K562 (cell line): ENCODE measurements at regions of chr19 and their contacts with region 1.

Region 1: GRCh38 chr19:17282488-17283255 is 971 bp downstream of the ANKLE1 start:
- DNase-seq: peak; percentile 85 to 91 (median 88)
- ATAC-seq: peak; percentile 96
- H3K4me3 ChIP-seq: peak overlapping the region; percentile 51
- H3K27ac ChIP-seq: peak overlapping the region; percentile 58; the same call in 2 of the 3 replicates
- H3K4me1 ChIP-seq: peaks cover 2 to 31% of the 10 kb centered on the region in 2 experiments
- H3K27me3 ChIP-seq: no peaks in the 10 kb centered on the region
- CTCF ChIP-seq: peak; percentile 88 to 95 (median 94)
- EP300 ChIP-seq: no peak
- POLR2A ChIP-seq: 0 out of 2 replicates have a peak, but pooled peaks have one; percentile 32
- RAD21 ChIP-seq: peak; percentile 86 to 94

Region 2: GRCh38 chr19:17069218-17069617 is 213.5 kb before region 1 on chr19:
- CTCF ChIA-PET with region 1: interaction called, 10 read pairs
- POLR2A ChIA-PET with region 1: interaction called, 3 read pairs
- in situ Hi-C with region 1: loop called (anchors 5 kb)
- intact Hi-C with region 1: loop called (anchors 2 kb)
- DNase-seq: no peak
- ATAC-seq: 0 out of 3 replicates have a peak, but pooled peaks have one; percentile 8
- H3K4me3 ChIP-seq: no peak overlapping the region
- H3K27ac ChIP-seq: no peak overlapping the region
- H3K4me1 ChIP-seq: peaks cover 7 to 10% of the 10 kb centered on the region in 2 experiments; a peak in 4 of 5 replicates
- H3K27me3 ChIP-seq: no peaks in the 10 kb centered on the region
- CTCF ChIP-seq: peak in 1 of 3 experiments; percentile 18; a peak in 2 of 6 replicates
- EP300 ChIP-seq: no peak
- POLR2A ChIP-seq: no peak
- RAD21 ChIP-seq: no peak

Region 3: GRCh38 chr19:17488593-17489391 is 206.1 kb after region 1 on chr19:
- CTCF ChIA-PET with region 1: no interaction called
- POLR2A ChIA-PET with region 1: no interaction called
- in situ Hi-C with region 1: no loop called
- intact Hi-C with region 1: no loop called
- DNase-seq: peak; percentile 93 to 97 (median 95)
- ATAC-seq: peak; percentile 100
- H3K4me3 ChIP-seq: peak overlapping the region; percentile 33
- H3K27ac ChIP-seq: no peak overlapping the region
- H3K4me1 ChIP-seq: peaks cover 8 to 33% of the 10 kb centered on the region in 2 experiments
- H3K27me3 ChIP-seq: no peaks in the 10 kb centered on the region
- CTCF ChIP-seq: peak; percentile 41 to 59 (median 44); a peak in 5 of 6 replicates
- EP300 ChIP-seq: no peak
- POLR2A ChIP-seq: 0 out of 2 replicates have a peak, but pooled peaks have one; percentile 44
- RAD21 ChIP-seq: no peak

Region 4: DNA sequence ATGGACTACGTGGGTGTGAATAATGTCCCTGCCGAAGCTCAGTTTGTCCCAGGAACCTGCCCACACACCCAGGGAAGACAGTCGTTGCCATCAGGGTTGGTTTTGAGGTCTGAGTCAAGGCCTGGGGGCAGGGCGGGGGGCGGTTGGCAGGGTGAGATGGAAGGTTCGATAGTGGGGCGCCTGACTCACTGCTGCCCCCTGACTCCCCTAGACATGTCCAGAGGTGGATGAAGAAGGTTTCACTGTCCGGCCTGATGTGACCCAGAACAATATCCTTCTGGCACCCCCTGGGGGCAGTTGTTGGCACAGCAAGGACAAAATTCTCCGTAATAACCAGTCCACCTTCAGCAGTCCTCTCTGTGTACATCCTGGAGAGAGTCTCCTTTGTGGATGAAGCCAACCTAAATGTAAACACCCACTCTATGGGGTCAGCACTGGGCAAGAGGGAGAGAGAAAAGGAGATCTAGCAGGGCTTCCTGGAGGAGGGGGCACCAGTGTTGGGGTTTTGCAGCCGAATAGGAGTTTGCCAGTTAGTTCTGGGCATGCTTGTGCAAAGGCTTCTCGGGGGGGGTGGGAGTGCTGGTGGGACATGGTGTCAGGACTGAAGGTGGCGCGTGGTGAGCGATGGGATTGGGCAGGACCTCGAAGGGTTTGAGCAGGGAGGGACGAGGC is 492.7 kb after region 1 on chr19:
- CTCF ChIA-PET with region 1: no interaction called
- POLR2A ChIA-PET with region 1: no interaction called
- in situ Hi-C with region 1: no loop called
- intact Hi-C with region 1: no loop called
- DNase-seq: peak; percentile 64 to 85 (median 76)
- ATAC-seq: peak; percentile 42
- H3K4me3 ChIP-seq: no peak overlapping the region
- H3K27ac ChIP-seq: no peak overlapping the region; the same call in 2 of the 3 replicates
- H3K4me1 ChIP-seq: peaks cover 12 to 37% of the 10 kb centered on the region in 2 experiments
- H3K27me3 ChIP-seq: no peaks in the 10 kb centered on the region
- CTCF ChIP-seq: peak; percentile 92 to 96 (median 94)
- EP300 ChIP-seq: no peak
- POLR2A ChIP-seq: no peak
- RAD21 ChIP-seq: peak; percentile 83 to 89